ENCODE measurements at regions of chr1 and their contacts with region 1.

Region 1: GRCh38 chr1:108049178-108049819 is 84.3 kb upstream of the VAV3 start:
- DNase-seq: no peak

Region 2: GRCh38 chr1:108016451-108016920 is 32.8 kb before region 1 on chr1:
- intact Hi-C with region 1: loop called (anchors 5 kb)
- DNase-seq: no peak